ENCODE measurements at regions of chr3 and their contacts with region 1.

Region 1: DNA sequence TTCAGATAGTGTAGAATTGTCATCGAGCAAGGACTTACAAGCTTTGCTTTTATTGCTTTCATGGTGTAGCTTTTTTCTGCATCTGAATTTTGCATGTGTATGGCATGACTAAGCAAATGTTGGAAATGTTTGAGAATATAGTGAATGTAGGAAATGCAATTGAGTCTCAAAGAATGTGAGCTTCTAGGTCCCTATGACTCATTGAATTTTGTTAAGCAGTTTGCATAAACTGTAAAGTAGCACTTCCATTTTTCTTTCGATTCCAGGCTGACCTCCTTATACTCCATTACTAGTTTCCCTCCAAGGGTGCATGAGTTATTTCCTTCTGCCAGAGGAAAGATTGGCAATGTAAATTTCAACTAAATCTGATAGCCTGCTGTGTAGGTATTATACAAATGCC is 619.2 kb downstream of the DIPK2A start:
- DNase-seq: no peak
- H3K4me3 ChIP-seq: no peak overlapping the region
- H3K27ac ChIP-seq: 0 out of 2 replicates have a peak overlapping the region, but pooled peaks have one; percentile 29
- H3K4me1 ChIP-seq: peaks cover 7% of the 10 kb centered on the region; the same call in 1 of the 2 replicates
- H3K27me3 ChIP-seq: no peaks in the 10 kb centered on the region
- CTCF ChIP-seq: no peak

Region 2: GRCh38 chr3:143963946-143964345 is 626.9 kb before region 1 on chr3:
- CTCF ChIA-PET with region 1: no interaction called
- POLR2A ChIA-PET with region 1: interaction called, 10 read pairs
- intact Hi-C with region 1: no loop called
- DNase-seq: no peak
- H3K4me3 ChIP-seq: no peak overlapping the region
- H3K27ac ChIP-seq: no peak overlapping the region
- H3K4me1 ChIP-seq: no peaks in the 10 kb centered on the region
- H3K27me3 ChIP-seq: no peaks in the 10 kb centered on the region
- CTCF ChIP-seq: no peak

Region 3: DNA sequence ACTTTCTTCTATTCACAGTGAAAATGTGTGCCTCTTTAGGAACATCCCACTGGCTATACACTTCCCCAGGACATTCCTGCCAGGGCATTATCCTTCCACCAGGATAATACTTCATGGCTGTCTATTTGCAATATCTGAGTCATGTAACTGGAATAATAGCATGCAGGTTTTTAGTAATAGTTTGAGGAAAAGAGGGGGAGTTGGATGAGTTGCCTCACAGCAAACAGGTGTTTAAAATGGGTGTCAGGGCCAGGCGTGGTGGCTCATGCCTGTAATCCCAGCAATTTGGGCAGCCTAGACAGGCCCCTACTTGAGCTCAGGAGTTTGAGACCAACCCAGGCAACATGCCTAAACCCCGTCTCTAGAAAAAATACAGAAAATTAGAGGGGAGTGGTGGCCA is 33.3 kb before region 1 on chr3:
- CTCF ChIA-PET with region 1: no interaction called
- POLR2A ChIA-PET with region 1: interaction called, 12 read pairs
- intact Hi-C with region 1: no loop called
- DNase-seq: no peak
- H3K4me3 ChIP-seq: no peak overlapping the region
- H3K27ac ChIP-seq: no peak overlapping the region
- H3K4me1 ChIP-seq: no peaks in the 10 kb centered on the region
- H3K27me3 ChIP-seq: no peaks in the 10 kb centered on the region
- CTCF ChIP-seq: no peak

Region 4: DNA sequence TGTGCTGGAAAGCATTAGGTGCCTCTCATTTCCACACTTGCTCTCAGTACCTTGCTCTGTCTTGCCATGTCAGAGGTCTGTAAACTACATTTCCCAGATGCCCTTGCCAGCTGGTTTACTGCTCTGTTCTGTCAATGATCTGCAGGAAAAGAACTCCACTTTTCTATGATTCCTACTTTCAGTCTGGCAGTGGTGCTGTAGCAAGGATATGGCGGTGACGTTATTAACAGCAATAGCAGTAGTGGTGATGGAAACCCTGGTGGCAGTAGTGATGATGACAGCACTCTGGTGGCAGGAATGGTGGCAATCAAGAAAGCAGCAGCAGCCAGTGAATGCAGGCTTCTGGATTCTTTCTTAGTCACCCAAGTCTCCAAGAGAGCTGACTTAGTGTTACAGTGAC is 46.0 kb after region 1 on chr3:
- CTCF ChIA-PET with region 1: no interaction called
- POLR2A ChIA-PET with region 1: no interaction called
- intact Hi-C with region 1: no loop called
- DNase-seq: no peak
- H3K4me3 ChIP-seq: no peak overlapping the region
- H3K27ac ChIP-seq: no peak overlapping the region
- H3K4me1 ChIP-seq: no peaks in the 10 kb centered on the region
- H3K27me3 ChIP-seq: no peaks in the 10 kb centered on the region
- CTCF ChIP-seq: no peak

Region 5: DNA sequence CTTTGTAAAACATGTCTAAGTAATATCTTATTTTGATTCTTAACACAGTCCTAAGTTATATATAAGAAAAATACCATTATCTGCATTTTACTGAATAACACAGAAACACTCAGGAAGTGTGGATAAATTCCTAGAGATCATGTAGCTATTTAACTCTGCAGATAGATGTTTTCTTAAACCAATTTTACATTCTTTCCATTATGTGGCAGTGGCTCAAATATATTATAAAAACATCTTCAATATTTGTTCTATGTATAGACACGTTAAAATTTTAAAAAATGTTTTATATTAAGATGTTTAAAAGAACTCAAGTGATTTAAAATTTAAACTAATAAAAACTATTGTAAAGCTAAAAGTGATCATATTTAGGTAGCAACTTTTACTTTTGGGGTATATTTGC is 64.6 kb after region 1 on chr3:
- CTCF ChIA-PET with region 1: no interaction called
- POLR2A ChIA-PET with region 1: no interaction called
- intact Hi-C with region 1: loop called (anchors 5 kb)
- DNase-seq: no peak
- H3K4me3 ChIP-seq: no peak overlapping the region
- H3K27ac ChIP-seq: no peak overlapping the region
- H3K4me1 ChIP-seq: no peaks in the 10 kb centered on the region
- H3K27me3 ChIP-seq: no peaks in the 10 kb centered on the region
- CTCF ChIP-seq: no peak

Measured in PC-9 (cell line).